A673 (cell line): ENCODE measurements at regions of chr2 and their contacts with region 1.

Region 1: GRCh38 chr2:96868555-96869280 is 1.2 kb downstream of the SEMA4C start:
- DNase-seq: peak; percentile 95
- H3K4me3 ChIP-seq: peak overlapping the region; percentile 97
- H3K27ac ChIP-seq: peak overlapping the region; percentile 99
- H3K4me1 ChIP-seq: peaks cover 19% of the 10 kb centered on the region
- H3K27me3 ChIP-seq: no peaks in the 10 kb centered on the region
- CTCF ChIP-seq: peak; percentile 64

Region 2: GRCh38 chr2:96839293-96839874 is 29.3 kb before region 1 on chr2:
- CTCF ChIA-PET with region 1: no interaction called
- POLR2A ChIA-PET with region 1: no interaction called
- intact Hi-C with region 1: no loop called
- DNase-seq: no peak
- H3K4me3 ChIP-seq: no peak overlapping the region
- H3K27ac ChIP-seq: no peak overlapping the region
- H3K4me1 ChIP-seq: no peaks in the 10 kb centered on the region
- H3K27me3 ChIP-seq: no peaks in the 10 kb centered on the region
- CTCF ChIP-seq: no peak

Region 3: GRCh38 chr2:96881349-96882195 is 12.9 kb after region 1 on chr2:
- CTCF ChIA-PET with region 1: interaction called, 10 read pairs
- POLR2A ChIA-PET with region 1: no interaction called
- intact Hi-C with region 1: no loop called
- DNase-seq: peak; percentile 59
- H3K4me3 ChIP-seq: no peak overlapping the region
- H3K27ac ChIP-seq: no peak overlapping the region
- H3K4me1 ChIP-seq: peaks cover 30% of the 10 kb centered on the region
- H3K27me3 ChIP-seq: no peaks in the 10 kb centered on the region
- CTCF ChIP-seq: no peak